ENCODE measurements at regions of chr2 and their contacts with region 1.

Region 1: GRCh38 chr2:231463698-231464575 is at the start of gene NCL:
- DNase-seq: peak; percentile 81 to 96 (median 88)
- ATAC-seq: peak; percentile 85 to 88
- H3K4me3 Mint-ChIP-seq: peak within 1 kb of the TSS; percentile 91 to 99 (median 96)
- H3K27ac Mint-ChIP-seq: peak within 1 kb of the TSS; percentile 99 to 100 (median 100)
- H3K4me1 Mint-ChIP-seq: peaks cover 29 to 50% (median 47%) of the 10 kb centered on the region in 4 donors
- H3K27me3 Mint-ChIP-seq: peaks cover 0 to 3% (median 0%) of the 10 kb centered on the region in 5 donors
- polyA plus RNA-seq, gene NCL: 370 to 590 (median 468) TPM

Region 2: DNA sequence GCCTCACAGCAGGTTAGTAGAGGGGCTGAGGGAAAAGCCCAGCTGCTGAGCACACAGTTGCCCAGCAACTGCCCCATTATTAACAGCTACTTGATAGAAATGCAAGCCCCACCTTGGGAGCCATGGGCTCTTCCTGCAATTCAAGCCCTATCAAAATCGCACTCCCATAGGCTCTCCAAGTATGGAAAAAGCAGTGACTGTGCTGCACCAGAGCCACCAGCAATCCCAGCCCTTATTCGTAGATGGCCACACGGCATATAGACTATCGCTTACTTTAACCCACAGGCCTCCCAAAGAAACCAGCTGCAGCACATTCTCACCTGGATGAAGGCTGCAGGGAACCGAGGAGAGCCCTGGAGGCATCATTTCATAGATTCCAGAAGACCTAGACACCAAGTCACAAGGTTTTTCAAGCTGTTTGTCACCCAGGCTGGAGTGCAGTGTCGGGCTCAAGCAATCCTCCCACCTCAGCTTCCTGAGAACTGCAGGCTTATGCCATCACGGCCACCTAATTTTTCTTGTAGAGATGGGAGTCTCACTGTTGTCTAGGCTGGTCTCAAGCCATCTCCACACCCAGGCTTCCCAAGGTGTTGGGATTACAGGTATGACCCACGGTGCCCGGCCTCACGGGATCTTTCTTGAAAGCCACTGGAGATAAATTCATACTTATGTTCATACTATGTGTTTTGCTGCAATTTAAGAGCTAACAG is 11.0 kb before region 1 on chr2:
- POLR2A ChIA-PET with region 1: interaction called, 55 read pairs
- DNase-seq: peak in 2 of 10 donors; percentile 14 to 18
- ATAC-seq: peak; percentile 8
- H3K4me3 Mint-ChIP-seq: peak overlapping the region in 2 of 10 donors; percentile 42 to 45
- H3K27ac Mint-ChIP-seq: peak overlapping the region; percentile 16 to 96 (median 58)
- H3K4me1 Mint-ChIP-seq: peaks cover 11 to 26% (median 14%) of the 10 kb centered on the region in 4 donors
- H3K27me3 Mint-ChIP-seq: no peaks in the 10 kb centered on the region

Region 3: DNA sequence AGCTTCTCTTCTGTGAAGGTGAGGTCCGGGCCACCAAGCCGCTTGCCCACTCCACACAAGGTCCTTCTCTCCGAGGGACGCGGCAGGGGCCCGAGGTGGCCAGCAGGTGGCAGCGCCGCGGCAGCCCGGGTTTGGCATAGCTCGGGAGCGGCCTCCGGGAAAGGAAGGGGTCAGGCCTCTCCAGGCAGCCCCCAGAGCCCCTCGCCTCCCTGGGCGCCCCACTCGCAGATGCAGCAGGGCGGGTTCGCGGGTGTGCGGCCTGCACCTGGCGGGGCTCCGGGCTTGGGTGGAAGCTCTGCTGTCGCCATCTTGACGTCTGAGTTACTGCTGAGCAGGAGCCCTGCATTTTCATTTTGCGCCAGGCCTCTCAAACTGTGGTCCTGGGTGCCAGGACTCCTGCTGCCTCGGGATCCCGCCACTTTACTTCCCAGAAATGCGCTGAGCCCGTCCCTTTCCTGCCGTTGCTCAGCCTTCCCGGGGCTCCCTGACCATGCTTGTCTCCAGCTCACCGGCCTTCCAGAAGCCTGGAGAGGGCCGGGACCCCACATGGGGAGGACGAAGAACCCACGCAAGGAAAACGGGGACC is 19.0 kb after region 1 on chr2:
- POLR2A ChIA-PET with region 1: interaction called, 100 read pairs
- DNase-seq: peak; percentile 58 to 81 (median 68)
- ATAC-seq: peak; percentile 82 to 83
- H3K4me3 Mint-ChIP-seq: peak overlapping the region; percentile 64 to 87 (median 79)
- H3K27ac Mint-ChIP-seq: peak overlapping the region; percentile 79 to 96 (median 90)
- H3K4me1 Mint-ChIP-seq: peaks cover 8 to 23% (median 15%) of the 10 kb centered on the region in 4 donors
- H3K27me3 Mint-ChIP-seq: no peaks in the 10 kb centered on the region

Region 4: DNA sequence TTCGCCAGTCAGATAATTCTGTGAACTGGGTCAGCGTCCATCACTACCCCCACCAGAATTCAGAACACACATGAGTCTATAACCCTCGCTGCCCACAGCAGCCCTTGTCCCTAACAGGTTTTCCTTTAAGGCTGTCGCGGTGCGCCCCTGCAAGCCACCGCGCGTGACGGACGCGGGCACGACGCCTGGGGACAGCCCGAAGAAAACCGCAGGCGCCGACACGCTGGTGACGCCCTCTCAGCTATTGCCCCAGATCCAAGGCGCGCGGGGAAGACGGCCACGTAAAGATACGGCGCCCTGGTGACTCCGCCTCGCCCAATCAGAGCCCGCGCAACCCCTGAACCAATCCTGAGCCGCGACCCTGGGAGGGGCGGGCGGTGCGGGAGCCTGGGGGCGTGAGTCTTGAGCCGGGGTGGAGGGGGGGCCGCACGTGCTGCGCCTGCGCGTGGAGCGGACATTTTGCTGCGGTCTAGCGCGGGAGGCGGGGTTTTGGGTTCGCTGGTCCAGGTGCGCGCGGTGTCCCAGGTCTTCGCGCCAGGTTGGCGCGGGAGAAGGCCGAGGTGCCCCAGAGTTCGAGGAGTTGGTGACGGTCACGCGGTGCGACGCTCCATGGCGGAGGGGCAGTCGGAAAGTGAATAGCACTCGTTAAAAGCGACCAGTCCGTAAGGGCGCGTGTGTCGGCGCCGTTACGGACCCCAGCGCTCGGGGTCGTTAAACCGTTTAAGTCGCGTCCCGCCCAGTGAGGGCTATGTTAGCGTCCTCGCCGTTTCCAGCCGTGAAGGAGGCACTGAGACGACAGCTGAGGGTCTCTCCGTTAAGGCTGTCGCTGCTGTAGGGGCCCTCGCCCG is 50.4 kb after region 1 on chr2:
- POLR2A ChIA-PET with region 1: interaction called, 51 read pairs
- DNase-seq: peak; percentile 96 to 99 (median 98)
- ATAC-seq: peak; percentile 97 to 98
- H3K4me3 Mint-ChIP-seq: peak overlapping the region; percentile 82 to 94 (median 91)
- H3K27ac Mint-ChIP-seq: peak overlapping the region; percentile 91 to 99 (median 98)
- H3K4me1 Mint-ChIP-seq: peaks cover 5 to 21% (median 17%) of the 10 kb centered on the region in 4 donors
- H3K27me3 Mint-ChIP-seq: no peaks in the 10 kb centered on the region

Region 5: GRCh38 chr2:231539991-231540390 is 76.1 kb after region 1 on chr2:
- POLR2A ChIA-PET with region 1: no interaction called
- DNase-seq: no peak
- ATAC-seq: no peak
- H3K4me3 Mint-ChIP-seq: no peak overlapping the region
- H3K27ac Mint-ChIP-seq: no peak overlapping the region
- H3K4me1 Mint-ChIP-seq: peaks cover 2 to 28% (median 4%) of the 10 kb centered on the region in 4 donors
- H3K27me3 Mint-ChIP-seq: peaks cover 0 to 2% (median 0%) of the 10 kb centered on the region in 5 donors

Region 6: GRCh38 chr2:231604685-231605606 is 141.0 kb after region 1 on chr2:
- POLR2A ChIA-PET with region 1: no interaction called
- DNase-seq: peak; percentile 90 to 99 (median 94)
- ATAC-seq: peak; percentile 82
- H3K4me3 Mint-ChIP-seq: peak overlapping the region; percentile 61 to 84 (median 70)
- H3K27ac Mint-ChIP-seq: peak overlapping the region; percentile 60 to 97 (median 92)
- H3K4me1 Mint-ChIP-seq: peaks cover 7 to 25% (median 9%) of the 10 kb centered on the region in 4 donors
- H3K27me3 Mint-ChIP-seq: peaks cover 0 to 7% (median 0%) of the 10 kb centered on the region in 5 donors

Measured in naive thymus-derived CD8-positive, alpha-beta T cell (primary cell).